WTC11 (cell line): ENCODE measurements at regions of chr3 and their contacts with region 1.

Region 1: DNA sequence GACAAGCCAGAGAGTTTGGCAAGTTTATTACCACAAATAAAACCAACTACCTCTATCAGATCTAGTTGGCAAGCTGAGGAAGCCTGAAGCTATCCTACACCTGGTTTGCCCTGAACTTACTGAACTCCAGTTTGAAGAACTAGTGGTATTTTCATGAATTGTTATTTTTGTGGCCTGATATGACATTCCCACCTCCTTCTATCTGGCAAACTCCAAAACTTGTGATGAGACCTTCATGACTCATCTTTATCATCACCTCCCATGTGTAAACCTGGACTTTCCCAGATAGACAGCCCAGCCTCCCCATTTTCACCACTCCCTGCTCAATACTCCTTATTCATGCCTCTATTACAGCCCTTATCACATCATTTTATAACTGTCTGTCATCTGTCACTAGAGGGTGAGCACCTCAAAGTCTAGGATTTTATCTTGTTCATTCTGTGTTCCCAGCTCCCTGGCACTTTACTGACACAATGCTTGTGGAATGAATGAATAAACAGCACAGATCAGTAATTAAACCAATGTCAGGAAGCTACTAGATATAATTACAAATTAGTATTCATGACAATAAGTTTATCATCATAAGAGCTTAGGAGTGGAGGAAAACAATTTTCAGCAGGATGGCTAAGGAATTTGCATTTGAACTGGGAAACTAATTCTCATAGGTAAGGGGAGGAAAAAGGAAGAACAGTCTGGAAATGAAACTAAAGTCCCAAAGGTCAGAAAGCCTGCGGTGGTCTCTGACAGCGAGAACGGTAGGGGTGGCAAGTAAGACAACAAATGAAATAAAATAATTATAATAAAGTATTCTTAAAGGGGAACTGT is 13.2 kb upstream of the TRANK1 start:
- DNase-seq: no peak
- ATAC-seq: no peak
- H3K4me3 Mint-ChIP-seq: no peak overlapping the region
- H3K27ac Mint-ChIP-seq: no peak overlapping the region
- H3K4me1 Mint-ChIP-seq: peaks cover 13% of the 10 kb centered on the region; the same call in 1 of the 2 replicates
- H3K27me3 Mint-ChIP-seq: no peaks in the 10 kb centered on the region
- CTCF ChIP-seq: no peak

Region 2: DNA sequence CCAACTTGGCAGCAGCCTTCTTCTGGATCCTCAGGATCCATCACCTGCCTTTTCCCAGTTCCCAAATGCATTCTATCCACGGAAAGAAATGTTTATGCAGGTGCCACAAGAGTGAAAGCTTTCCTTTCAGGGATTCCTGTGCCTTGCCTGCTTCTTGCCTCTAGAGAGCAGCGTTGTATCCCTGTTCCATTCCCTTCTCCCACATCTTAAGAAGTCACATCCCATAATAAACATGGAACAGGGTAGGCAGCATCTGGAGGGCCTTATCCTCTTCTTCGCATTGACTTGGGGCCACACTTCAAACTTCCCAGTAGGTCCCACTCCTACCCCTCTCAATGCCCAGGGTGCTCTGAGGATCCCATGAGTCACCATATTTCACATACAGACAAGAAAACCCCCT is 121.0 kb before region 1 on chr3:
- CTCF ChIA-PET with region 1: interaction called, 11 read pairs
- POLR2A ChIA-PET with region 1: no interaction called
- DNase-seq: no peak
- ATAC-seq: peak; percentile 90
- H3K4me3 Mint-ChIP-seq: no peak overlapping the region
- H3K27ac Mint-ChIP-seq: no peak overlapping the region
- H3K4me1 Mint-ChIP-seq: no peaks in the 10 kb centered on the region
- H3K27me3 Mint-ChIP-seq: no peaks in the 10 kb centered on the region
- CTCF ChIP-seq: no peak

Region 3: DNA sequence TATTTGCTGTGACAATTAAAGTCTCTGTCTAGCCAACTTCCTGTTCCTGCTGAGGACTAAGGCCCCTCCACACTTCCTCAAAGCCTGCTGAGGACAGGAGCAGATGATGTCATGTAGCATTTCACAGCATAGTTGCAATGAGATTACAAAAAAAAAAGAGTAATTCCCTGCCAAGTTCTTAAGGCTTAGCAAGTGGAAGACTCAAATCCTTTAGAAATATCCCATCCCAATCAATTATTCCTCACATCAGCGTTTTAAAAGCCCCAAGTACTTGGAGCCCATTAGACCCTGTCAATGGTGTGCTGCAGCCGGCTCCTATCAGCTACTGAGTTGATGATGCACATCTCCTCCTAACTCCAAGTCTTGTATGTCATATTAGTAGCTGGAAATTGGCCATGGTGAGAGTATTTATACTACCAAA is 64.9 kb before region 1 on chr3:
- CTCF ChIA-PET with region 1: interaction called, 12 read pairs
- POLR2A ChIA-PET with region 1: no interaction called
- DNase-seq: no peak
- ATAC-seq: peak; percentile 65
- H3K4me3 Mint-ChIP-seq: no peak overlapping the region
- H3K27ac Mint-ChIP-seq: 0 out of 2 replicates have a peak overlapping the region, but pooled peaks have one; percentile 53
- H3K4me1 Mint-ChIP-seq: peaks cover 29% of the 10 kb centered on the region
- H3K27me3 Mint-ChIP-seq: no peaks in the 10 kb centered on the region
- CTCF ChIP-seq: no peak

Region 4: DNA sequence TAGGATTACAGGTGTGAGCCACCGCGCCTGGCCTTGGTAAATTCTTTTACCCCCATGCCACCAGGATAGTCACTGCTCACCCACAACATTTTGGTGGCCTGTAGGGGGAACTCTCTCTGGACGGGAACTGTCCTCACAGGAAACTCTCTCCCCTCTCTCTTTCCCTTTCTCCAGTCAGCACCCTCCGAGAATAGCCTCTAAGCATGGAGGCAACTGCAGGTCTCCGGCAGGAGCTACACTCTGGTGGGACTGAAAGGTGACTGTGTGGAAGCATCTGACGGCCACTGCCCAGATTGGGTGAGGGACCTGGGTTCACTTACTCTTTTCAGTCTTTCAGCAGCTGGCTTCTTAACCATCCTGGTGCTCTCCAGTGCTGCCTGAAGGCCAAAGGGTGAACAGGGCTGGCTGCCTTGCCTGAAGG is 34.5 kb before region 1 on chr3:
- CTCF ChIA-PET with region 1: interaction called, 17 read pairs
- POLR2A ChIA-PET with region 1: no interaction called
- DNase-seq: no peak
- ATAC-seq: peak; percentile 86
- H3K4me3 Mint-ChIP-seq: no peak overlapping the region
- H3K27ac Mint-ChIP-seq: no peak overlapping the region; the same call in 1 of the 2 replicates
- H3K4me1 Mint-ChIP-seq: peaks cover 15% of the 10 kb centered on the region
- H3K27me3 Mint-ChIP-seq: no peaks in the 10 kb centered on the region
- CTCF ChIP-seq: no peak

Region 5: GRCh38 chr3:36944012-36944640 is 13.9 kb before region 1 on chr3:
- CTCF ChIA-PET with region 1: interaction called, 55 read pairs
- POLR2A ChIA-PET with region 1: interaction called, 4 read pairs
- DNase-seq: peak; percentile 66
- ATAC-seq: peak; percentile 54
- H3K4me3 Mint-ChIP-seq: peak overlapping the region; percentile 75
- H3K27ac Mint-ChIP-seq: no peak overlapping the region
- H3K4me1 Mint-ChIP-seq: peaks cover 25% of the 10 kb centered on the region
- H3K27me3 Mint-ChIP-seq: peaks cover 54% of the 10 kb centered on the region
- CTCF ChIP-seq: no peak

Region 6: GRCh38 chr3:36993326-36994283 is 35.5 kb after region 1 on chr3 and contains the start of gene MLH1:
- CTCF ChIA-PET with region 1: interaction called, 63 read pairs
- POLR2A ChIA-PET with region 1: interaction called, 5 read pairs
- DNase-seq: peak; percentile 99
- ATAC-seq: peak; percentile 92
- H3K4me3 Mint-ChIP-seq: no peak within 1 kb of the TSS
- H3K27ac Mint-ChIP-seq: no peak within 1 kb of the TSS
- H3K4me1 Mint-ChIP-seq: peaks cover 29% of the 10 kb centered on the region
- H3K27me3 Mint-ChIP-seq: no peaks in the 10 kb centered on the region
- CTCF ChIP-seq: no peak
- total RNA-seq, gene MLH1: 46.4 to 47.2 TPM (median 47.2 TPM) in 3 replicates